ENCODE measurements at regions of chr11 and their contacts with region 1.

Region 1: DNA sequence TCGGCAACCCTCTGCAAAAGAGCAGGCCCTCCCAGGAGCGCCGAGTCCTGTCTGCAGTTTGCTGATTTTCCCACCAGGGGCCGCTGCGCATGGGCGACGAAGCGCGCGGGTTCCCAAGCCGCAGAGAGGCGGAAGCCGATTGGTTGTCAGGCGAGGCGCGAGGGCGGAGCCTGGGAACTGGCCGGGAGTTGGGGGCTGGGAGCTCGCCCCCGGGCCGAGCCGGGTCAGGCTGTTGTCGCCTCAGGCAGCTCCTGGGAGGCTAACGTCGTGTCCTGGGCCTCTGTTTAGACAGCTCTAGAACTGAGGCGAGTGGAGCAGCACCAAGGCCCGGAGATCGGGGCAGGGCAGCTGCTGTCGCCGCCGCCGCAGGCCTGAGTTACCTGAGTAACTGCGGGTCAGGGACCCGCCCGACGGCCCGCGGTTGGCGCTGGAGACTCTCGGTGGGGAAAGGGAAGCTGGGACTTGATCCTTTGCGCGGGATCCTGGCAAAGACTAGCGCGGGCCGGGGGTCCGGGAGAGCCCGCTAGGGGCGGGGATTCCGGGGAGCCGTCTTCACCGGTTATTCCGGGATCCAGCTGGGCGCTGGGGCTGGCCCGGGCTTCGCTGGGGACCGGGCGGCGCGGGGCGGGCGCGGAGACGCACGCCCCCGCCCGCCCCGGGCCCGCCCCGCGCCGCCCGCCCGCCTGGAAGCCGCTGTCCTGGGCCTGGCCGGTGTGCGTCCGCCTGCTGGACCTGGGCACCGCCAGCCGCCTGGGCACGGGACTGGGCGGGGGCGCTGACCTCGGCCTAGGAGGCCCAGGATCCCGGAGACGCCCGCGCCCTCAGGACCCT is at the start of gene STIM1:
- DNase-seq: peak; percentile 82 to 96 (median 93)
- H3K4me3 ChIP-seq: peak within 1 kb of the TSS; percentile 61 to 96 (median 87)
- H3K27ac ChIP-seq: peak within 1 kb of the TSS in 57 of 59 donors; percentile 17 to 96 (median 89)
- H3K27me3 ChIP-seq: no peaks in the 10 kb centered on the region
- CTCF ChIP-seq: peak; percentile 85 to 100 (median 98)
- total RNA-seq, gene STIM1: 40.9 to 92.8 (median 69.6) TPM

Region 2: GRCh38 chr11:4072668-4073285 is 217.6 kb after region 1 on chr11:
- intact Hi-C with region 1: loop called (anchors 1 to 2 kb)
- DNase-seq: peak in 3 of 10 donors; percentile 55 to 69 (median 67)
- H3K4me3 ChIP-seq: peak overlapping the region in 4 of 59 donors; percentile 6 to 48 (median 16)
- H3K27ac ChIP-seq: peak overlapping the region in 13 of 59 donors; percentile 2 to 51 (median 17)
- H3K27me3 ChIP-seq: peaks cover 0 to 6% (median 0%) of the 10 kb centered on the region in 45 donors
- CTCF ChIP-seq: peak; percentile 82 to 99 (median 92)

Measured in dorsolateral prefrontal cortex (tissue), 120 donors.